ENCODE measurements at regions of chr17 and their contacts with region 1.

Region 1: DNA sequence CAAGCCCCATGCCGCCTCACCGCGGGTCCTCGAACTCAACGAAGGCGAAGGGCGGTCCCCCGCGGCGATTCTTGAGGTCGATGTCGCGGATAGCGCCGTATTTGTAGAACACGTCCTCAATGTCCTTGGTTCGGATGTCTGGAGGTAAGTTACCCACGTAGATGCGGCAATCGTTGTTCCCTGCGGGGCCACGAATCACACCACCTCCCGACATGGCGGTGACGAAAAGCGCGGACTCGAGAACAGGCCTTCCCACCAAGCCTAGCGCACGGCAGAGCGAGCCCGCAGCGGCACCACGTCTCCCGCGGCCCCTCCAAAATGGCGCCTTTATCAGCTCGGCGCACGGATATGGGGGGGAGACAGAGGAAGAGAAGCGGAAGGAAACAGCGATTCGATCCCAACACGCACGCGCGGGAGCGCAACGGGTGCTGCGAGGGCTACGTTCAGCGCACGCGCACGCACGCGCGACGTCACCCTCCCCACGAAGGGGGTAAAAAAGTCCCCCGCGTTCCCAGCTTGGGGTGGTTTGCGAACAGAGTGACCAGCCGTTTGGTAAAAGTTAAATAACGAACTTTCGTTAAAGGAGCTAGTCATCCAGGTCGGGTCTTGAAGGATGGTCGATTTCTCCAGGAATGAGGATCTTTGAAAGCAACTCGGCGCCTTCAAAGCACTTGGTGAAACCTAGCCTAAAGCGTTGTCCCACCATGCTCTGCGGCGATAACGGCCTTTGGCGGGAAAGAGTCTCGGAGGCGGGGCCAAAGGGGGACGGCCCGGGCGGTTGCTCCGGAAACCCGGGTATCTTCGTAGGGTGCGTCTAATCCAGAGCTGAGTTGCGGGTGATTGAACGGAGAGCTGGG is at the start of gene SRSF1:
- DNase-seq: peak; percentile 97
- H3K4me3 ChIP-seq: peak within 1 kb of the TSS; percentile 78 to 97 (median 88)
- H3K27ac ChIP-seq: peak within 1 kb of the TSS; percentile 96
- H3K4me1 ChIP-seq: peaks cover 21% of the 10 kb centered on the region
- H3K27me3 ChIP-seq: no peaks in the 10 kb centered on the region
- CTCF ChIP-seq: no peak
- total RNA-seq, gene SRSF1: 197 to 238 TPM

Region 2: DNA sequence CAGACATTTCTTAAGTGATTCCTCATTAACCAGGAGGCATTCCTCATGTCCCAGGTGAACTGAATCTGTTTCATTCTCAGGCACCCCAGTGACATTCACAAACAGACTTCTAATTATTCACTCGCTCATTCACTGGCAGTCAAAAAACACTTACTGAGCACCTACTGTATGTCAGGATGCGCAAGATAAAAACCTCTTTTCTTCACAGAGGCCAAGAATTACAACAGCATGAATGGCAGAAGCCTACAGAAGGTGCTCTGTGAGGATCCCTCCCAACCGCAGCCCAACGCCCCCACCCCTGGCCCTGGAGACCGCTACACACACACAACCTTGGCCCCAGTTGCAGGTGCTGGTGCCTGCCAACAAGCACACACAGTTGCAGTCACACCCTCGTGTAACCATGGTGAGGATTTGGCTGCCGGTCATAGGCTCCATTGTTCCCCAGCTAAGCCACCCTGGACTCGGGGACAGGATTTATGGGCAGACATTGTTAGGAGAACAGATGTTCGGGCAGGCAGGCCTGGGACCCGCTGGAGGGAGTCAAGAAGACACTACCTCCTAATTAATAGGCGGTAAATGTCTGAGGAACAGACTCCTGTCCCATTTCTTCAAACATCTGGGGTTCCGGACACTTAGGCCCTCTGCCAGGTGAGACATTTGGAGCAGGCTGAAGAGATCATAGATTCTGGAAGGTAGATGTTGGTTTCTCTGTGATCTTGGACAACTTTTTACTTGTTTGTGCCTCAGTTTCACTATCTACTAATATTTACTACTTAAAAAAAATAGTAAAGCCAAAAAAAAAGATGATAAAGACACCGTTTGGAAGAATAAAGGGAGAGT is 95.1 kb before region 1 on chr17:
- CTCF ChIA-PET with region 1: no interaction called
- dilution Hi-C with region 1: no loop called
- in situ Hi-C with region 1: no loop called
- intact Hi-C with region 1: no loop called
- DNase-seq: peak; percentile 82
- H3K4me3 ChIP-seq: no peak overlapping the region
- H3K27ac ChIP-seq: peak overlapping the region; percentile 45
- H3K4me1 ChIP-seq: peaks cover 13% of the 10 kb centered on the region
- H3K27me3 ChIP-seq: no peaks in the 10 kb centered on the region
- CTCF ChIP-seq: no peak

Region 3: DNA sequence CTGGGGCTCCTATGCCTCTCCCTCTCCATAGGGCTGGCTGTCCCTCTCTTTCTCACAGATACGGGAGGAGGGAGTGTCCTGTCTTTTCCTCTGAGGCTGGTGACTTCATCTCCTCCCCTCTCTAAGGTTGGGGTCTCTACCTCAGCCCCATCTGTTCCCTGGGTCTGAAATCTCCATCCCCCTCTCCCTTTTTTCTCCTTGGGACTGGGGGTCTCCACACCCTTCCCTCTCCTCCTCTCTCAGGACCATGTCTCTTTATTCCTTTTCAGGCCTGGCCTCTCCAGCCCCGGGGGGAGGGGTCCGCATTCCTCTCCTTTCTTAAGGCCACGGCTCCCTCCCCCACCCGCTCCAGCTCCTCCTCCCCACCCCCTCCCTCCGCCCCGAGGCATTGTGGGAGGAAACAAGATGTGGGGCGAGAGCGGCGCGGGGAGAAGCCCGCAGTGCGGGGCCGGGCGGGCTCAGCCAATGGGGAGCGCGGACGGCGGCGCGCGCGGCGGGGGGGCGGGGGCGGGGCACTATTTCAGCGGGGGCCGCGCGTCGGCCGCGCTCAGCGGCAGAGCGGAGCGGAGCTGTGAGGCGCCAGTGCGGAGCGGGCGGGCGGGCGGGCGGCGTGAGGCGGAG is 75.8 kb after region 1 on chr17 and contains the start of gene DYNLL2:
- CTCF ChIA-PET with region 1: no interaction called
- dilution Hi-C with region 1: no loop called
- in situ Hi-C with region 1: no loop called
- intact Hi-C with region 1: loop called (anchors 1 kb)
- DNase-seq: peak; percentile 61
- H3K4me3 ChIP-seq: peak within 1 kb of the TSS; percentile 70 to 90 (median 84)
- H3K27ac ChIP-seq: peak within 1 kb of the TSS; percentile 16
- H3K4me1 ChIP-seq: peaks cover 10% of the 10 kb centered on the region
- H3K27me3 ChIP-seq: no peaks in the 10 kb centered on the region
- CTCF ChIP-seq: no peak
- total RNA-seq, gene DYNLL2: 12.8 to 27.6 TPM

Region 4: GRCh38 chr17:58096892-58097291 is 89.7 kb after region 1 on chr17:
- CTCF ChIA-PET with region 1: no interaction called
- dilution Hi-C with region 1: no loop called
- in situ Hi-C with region 1: loop called in 1 of 2 experiments (anchors 10 kb)
- intact Hi-C with region 1: no loop called
- DNase-seq: no peak
- H3K4me3 ChIP-seq: no peak overlapping the region
- H3K27ac ChIP-seq: no peak overlapping the region
- H3K4me1 ChIP-seq: peaks cover 12% of the 10 kb centered on the region
- H3K27me3 ChIP-seq: no peaks in the 10 kb centered on the region
- CTCF ChIP-seq: peak in 1 of 2 donors; percentile 13